CD8-positive, alpha-beta T cell (primary cell): ENCODE measurements at regions of chr1 and their contacts with region 1.

Region 1: DNA sequence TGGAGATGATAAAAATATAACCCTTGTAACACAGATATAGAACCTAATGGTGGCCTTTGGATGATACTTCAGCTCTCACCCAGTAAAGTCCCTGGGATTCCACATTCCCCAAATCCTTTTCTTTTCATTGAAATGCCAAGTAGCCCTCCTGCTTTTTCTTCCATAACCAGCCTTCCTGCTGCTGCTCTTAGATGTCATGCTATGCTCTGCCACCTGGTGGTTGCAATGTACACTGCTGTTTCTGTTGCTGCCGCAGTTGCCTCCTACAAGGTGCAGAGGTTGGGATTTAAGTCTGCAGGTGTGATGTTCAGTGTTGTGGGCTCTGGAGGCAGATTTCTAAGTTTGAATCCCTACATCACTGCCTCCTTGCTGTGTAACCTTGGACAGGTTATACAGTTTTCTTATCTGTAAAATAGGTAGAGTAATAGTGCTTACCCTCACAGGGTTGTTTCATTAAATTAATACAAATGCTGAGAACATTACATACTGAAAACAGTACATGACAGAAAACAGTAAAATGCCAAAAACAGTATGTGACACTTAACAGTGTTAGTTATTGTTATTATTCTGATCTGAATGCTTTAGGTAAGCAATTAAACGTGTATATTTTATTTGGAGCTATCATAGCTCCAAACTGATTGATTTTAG is 64.3 kb downstream of the CAMSAP2 start:
- DNase-seq: peak; percentile 43 to 85 (median 75)
- ATAC-seq: peak; percentile 92
- H3K4me3 ChIP-seq: no peak overlapping the region
- H3K4me3 Mint-ChIP-seq: no peak overlapping the region
- H3K27ac ChIP-seq: no peak overlapping the region
- H3K27ac Mint-ChIP-seq: no peak overlapping the region
- H3K4me1 ChIP-seq: no peaks in the 10 kb centered on the region
- H3K4me1 Mint-ChIP-seq: peaks cover 4% of the 10 kb centered on the region
- H3K27me3 ChIP-seq: no peaks in the 10 kb centered on the region
- H3K27me3 Mint-ChIP-seq: no peaks in the 10 kb centered on the region
- CTCF ChIP-seq: peak; percentile 97

Region 2: GRCh38 chr1:199684686-199685273 is 1118.2 kb before region 1 on chr1:
- CTCF ChIA-PET with region 1: no interaction called
- POLR2A ChIA-PET with region 1: no interaction called
- intact Hi-C with region 1: loop called in 1 of 2 experiments (anchors 5 kb)
- DNase-seq: peak in 3 of 9 experiments; percentile 6 to 57 (median 45)
- ATAC-seq: peak; percentile 61
- H3K4me3 ChIP-seq: no peak overlapping the region
- H3K4me3 Mint-ChIP-seq: no peak overlapping the region
- H3K27ac ChIP-seq: no peak overlapping the region
- H3K27ac Mint-ChIP-seq: no peak overlapping the region
- H3K4me1 ChIP-seq: no peaks in the 10 kb centered on the region
- H3K4me1 Mint-ChIP-seq: no peaks in the 10 kb centered on the region
- H3K27me3 ChIP-seq: no peaks in the 10 kb centered on the region
- H3K27me3 Mint-ChIP-seq: peaks cover 8% of the 10 kb centered on the region
- CTCF ChIP-seq: peak; percentile 68

Region 3: DNA sequence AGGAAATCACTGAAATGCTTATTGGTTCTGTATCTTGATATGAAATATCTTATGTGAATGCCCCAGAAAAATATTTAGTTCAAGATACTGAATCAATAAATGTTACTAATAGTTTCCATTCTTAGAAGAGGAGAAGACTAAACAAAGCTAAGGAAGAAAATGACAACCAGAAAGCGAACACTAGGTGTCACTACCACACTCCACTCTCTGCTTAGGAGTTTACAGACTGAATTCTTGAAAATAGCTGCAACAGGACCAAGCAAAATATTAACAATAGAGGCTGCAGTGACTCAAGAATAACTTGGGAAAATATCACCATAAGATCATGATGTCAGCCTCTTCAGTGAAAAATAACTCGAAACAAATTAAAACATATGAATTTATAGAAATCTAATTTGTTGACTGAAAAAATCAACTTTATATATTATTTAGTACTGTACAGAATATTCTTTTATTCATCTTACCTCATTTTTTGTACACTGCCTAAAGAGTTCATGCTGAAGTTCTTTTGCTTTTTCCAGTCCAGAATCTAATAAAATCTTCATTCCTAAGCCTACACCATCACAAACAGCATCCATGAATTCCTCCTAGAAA is 244.0 kb before region 1 on chr1:
- CTCF ChIA-PET with region 1: interaction called, 31 read pairs
- POLR2A ChIA-PET with region 1: no interaction called
- intact Hi-C with region 1: loop called in 1 of 2 experiments (anchors 1 kb)
- DNase-seq: peak in 2 of 9 experiments; percentile 40 to 58
- ATAC-seq: no peak
- H3K4me3 ChIP-seq: no peak overlapping the region
- H3K4me3 Mint-ChIP-seq: no peak overlapping the region
- H3K27ac ChIP-seq: no peak overlapping the region
- H3K27ac Mint-ChIP-seq: no peak overlapping the region
- H3K4me1 ChIP-seq: no peaks in the 10 kb centered on the region
- H3K4me1 Mint-ChIP-seq: no peaks in the 10 kb centered on the region
- H3K27me3 ChIP-seq: no peaks in the 10 kb centered on the region
- H3K27me3 Mint-ChIP-seq: no peaks in the 10 kb centered on the region
- CTCF ChIP-seq: peak; percentile 58

Region 4: DNA sequence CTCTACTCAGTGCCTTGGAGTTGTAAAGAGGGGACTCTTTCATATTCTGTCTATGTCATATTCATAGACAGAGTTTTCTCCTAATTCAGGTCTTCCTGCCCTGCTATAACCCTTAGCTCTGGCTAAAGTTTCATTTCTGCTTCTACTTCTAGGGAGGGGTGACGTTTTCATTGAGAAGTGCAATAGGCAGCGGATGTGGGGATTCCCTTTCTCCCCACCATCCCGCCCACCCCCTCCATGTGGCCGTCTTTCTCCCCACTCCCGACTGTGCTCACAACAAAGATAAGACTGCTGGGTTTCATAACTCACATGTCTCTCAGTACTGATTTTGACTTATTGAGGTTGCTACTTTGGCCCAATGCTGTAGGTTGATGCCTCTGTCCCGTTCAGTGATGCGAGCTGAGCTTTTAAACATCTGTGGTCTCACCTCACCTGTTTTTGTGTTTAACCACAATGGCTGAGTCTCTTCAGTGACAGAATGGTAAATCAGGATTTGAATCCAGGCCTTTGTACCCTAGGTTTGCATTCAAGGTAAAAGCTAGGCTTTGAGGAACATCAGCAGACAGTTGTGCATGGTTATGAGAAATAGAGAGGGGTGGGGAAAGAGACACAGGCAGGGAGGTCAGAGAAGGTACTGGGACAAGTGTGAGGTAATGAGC is 174.6 kb before region 1 on chr1:
- CTCF ChIA-PET with region 1: interaction called, 81 read pairs
- POLR2A ChIA-PET with region 1: no interaction called
- intact Hi-C with region 1: no loop called
- DNase-seq: peak in 4 of 9 experiments; percentile 16 to 79 (median 52)
- ATAC-seq: peak; percentile 50
- H3K4me3 ChIP-seq: no peak overlapping the region
- H3K4me3 Mint-ChIP-seq: peak overlapping the region; percentile 19
- H3K27ac ChIP-seq: no peak overlapping the region
- H3K27ac Mint-ChIP-seq: no peak overlapping the region
- H3K4me1 ChIP-seq: peaks cover 6% of the 10 kb centered on the region
- H3K4me1 Mint-ChIP-seq: peaks cover 18% of the 10 kb centered on the region
- H3K27me3 ChIP-seq: no peaks in the 10 kb centered on the region
- H3K27me3 Mint-ChIP-seq: no peaks in the 10 kb centered on the region
- CTCF ChIP-seq: no peak

Region 5: GRCh38 chr1:200669314-200670241 is 133.4 kb before region 1 on chr1 and contains the start of gene DDX59:
- CTCF ChIA-PET with region 1: interaction called, 6 read pairs
- POLR2A ChIA-PET with region 1: no interaction called
- intact Hi-C with region 1: loop called in 1 of 2 experiments (anchors 1 kb)
- DNase-seq: peak; percentile 67 to 93 (median 89)
- ATAC-seq: peak; percentile 89
- H3K4me3 ChIP-seq: peak within 1 kb of the TSS; percentile 82 to 94
- H3K4me3 Mint-ChIP-seq: peak within 1 kb of the TSS; percentile 94
- H3K27ac ChIP-seq: peak within 1 kb of the TSS; percentile 95 to 98
- H3K27ac Mint-ChIP-seq: peak within 1 kb of the TSS; percentile 94
- H3K4me1 ChIP-seq: peaks cover 21% of the 10 kb centered on the region
- H3K4me1 Mint-ChIP-seq: peaks cover 42% of the 10 kb centered on the region
- H3K27me3 ChIP-seq: no peaks in the 10 kb centered on the region
- H3K27me3 Mint-ChIP-seq: no peaks in the 10 kb centered on the region
- CTCF ChIP-seq: no peak
- total RNA-seq, gene DDX59: 24.0 to 32.9 TPM

Region 6: GRCh38 chr1:200738740-200739498 is 64.1 kb before region 1 on chr1 and contains the start of gene CAMSAP2:
- CTCF ChIA-PET with region 1: no interaction called
- POLR2A ChIA-PET with region 1: no interaction called
- intact Hi-C with region 1: loop called in 1 of 2 experiments (anchors 2 kb)
- DNase-seq: peak; percentile 16 to 78 (median 63)
- ATAC-seq: peak; percentile 68
- H3K4me3 ChIP-seq: peak within 1 kb of the TSS; percentile 82 to 84
- H3K4me3 Mint-ChIP-seq: peak within 1 kb of the TSS; percentile 93
- H3K27ac ChIP-seq: peak within 1 kb of the TSS; percentile 28 to 41
- H3K27ac Mint-ChIP-seq: peak within 1 kb of the TSS; percentile 84
- H3K4me1 ChIP-seq: peaks cover 25% of the 10 kb centered on the region
- H3K4me1 Mint-ChIP-seq: peaks cover 31% of the 10 kb centered on the region
- H3K27me3 ChIP-seq: peaks cover 0 to 4% of the 10 kb centered on the region in 2 experiments
- H3K27me3 Mint-ChIP-seq: no peaks in the 10 kb centered on the region
- CTCF ChIP-seq: no peak
- total RNA-seq, gene CAMSAP2: 1.7 to 2.2 TPM